ENCODE measurements at regions of chr19 and their contacts with region 1.

Region 1: GRCh38 chr19:18521885-18522624 is at the start of gene ELL:
- DNase-seq: peak; percentile 100
- H3K4me3 Mint-ChIP-seq: peak within 1 kb of the TSS; percentile 91
- H3K27ac Mint-ChIP-seq: peak within 1 kb of the TSS; percentile 88
- H3K4me1 Mint-ChIP-seq: peaks cover 14% of the 10 kb centered on the region
- H3K27me3 Mint-ChIP-seq: peaks cover 1% of the 10 kb centered on the region
- total RNA-seq, gene ELL: 25.5 and 27.8 TPM in 2 replicates

Region 2: DNA sequence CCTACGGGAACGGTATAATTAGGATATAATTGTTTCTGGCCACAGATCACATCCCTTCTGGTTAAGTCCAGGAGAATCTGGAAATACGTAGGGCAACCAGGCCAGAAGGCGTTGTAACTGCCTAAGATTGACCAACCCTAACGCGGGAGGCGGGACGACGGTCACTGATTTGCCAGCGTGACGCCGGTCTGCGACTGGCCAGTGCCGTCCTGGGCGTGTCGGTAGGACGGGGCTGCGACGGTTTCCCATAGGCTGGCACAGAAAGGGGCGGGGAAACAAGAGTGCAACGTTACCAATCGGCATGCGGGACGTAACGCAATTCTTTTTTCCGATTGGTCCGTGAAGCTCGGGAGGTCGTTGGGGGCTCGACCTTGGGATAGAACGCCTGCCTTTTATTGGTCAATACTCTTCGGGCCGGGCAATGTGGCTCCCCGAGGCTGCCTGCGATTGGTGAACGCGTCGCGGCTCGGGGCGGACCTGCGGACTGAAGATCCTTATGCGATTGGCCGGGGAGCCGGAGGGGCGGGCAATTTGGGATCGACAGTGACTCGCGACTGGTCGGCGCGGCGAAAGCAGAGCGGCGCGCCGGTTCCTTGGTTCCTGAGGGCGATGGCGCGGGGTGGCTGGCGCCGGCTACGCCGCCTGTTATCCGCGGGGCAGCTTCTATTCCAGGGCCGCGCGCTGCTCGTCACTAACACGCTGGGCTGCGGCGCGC is 329.2 kb before region 1 on chr19 and contains the start of gene MPV17L2:
- intact Hi-C with region 1: loop called (anchors 1 kb)
- DNase-seq: peak; percentile 99
- H3K4me3 Mint-ChIP-seq: peak within 1 kb of the TSS; percentile 81
- H3K27ac Mint-ChIP-seq: peak within 1 kb of the TSS; percentile 86
- H3K4me1 Mint-ChIP-seq: peaks cover 21% of the 10 kb centered on the region
- H3K27me3 Mint-ChIP-seq: no peaks in the 10 kb centered on the region
- total RNA-seq, gene MPV17L2: 18.4 and 20.9 TPM in 2 replicates

Region 3: GRCh38 chr19:18436671-18437490 is 85.2 kb before region 1 on chr19:
- intact Hi-C with region 1: no loop called
- DNase-seq: peak; percentile 91
- H3K4me3 Mint-ChIP-seq: peak overlapping the region; percentile 73
- H3K27ac Mint-ChIP-seq: peak overlapping the region; percentile 20
- H3K4me1 Mint-ChIP-seq: peaks cover 17% of the 10 kb centered on the region
- H3K27me3 Mint-ChIP-seq: no peaks in the 10 kb centered on the region

Region 4: DNA sequence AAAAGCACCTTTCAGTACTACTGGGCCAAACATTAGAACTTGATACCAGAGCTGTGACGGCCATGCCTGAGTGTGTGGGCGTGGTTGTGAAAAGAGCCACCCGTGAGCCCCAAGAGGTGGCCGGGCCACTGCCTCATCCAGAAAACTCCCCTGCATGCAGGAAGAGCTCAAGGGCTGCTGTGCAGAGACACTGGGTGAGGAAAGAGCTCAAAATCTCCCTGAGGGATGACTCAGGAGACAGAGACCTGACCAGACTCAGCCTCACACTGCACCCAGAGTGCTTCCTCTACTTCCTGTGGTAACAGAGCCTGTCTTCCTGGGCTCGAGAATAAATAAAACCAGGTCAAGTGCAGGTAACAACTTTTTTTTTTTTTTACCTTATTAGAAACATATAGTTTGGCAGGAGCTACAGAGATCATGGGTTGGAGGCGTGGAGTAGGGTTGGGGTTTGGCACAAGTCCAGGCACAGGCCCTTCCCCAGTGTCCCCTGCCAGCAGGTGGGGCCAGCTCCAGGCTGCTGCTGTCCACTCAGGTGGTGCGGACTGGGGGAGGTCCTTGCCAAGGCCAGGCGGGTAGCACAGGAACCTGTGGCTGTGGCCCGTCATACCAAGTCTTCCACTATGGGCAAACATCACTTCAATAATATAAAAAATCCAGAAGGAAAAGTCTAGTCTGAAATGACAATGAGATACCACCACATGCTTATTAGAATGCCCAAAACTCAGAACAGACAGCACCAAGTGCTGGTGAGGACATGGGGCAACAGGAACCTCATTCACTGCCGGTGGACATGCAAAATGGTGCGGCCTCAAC is 25.7 kb before region 1 on chr19:
- intact Hi-C with region 1: loop called (anchors 1 kb)
- DNase-seq: peak; percentile 85
- H3K4me3 Mint-ChIP-seq: peak overlapping the region; percentile 66
- H3K27ac Mint-ChIP-seq: peak overlapping the region; percentile 89
- H3K4me1 Mint-ChIP-seq: peaks cover 60% of the 10 kb centered on the region
- H3K27me3 Mint-ChIP-seq: no peaks in the 10 kb centered on the region

Region 5: DNA sequence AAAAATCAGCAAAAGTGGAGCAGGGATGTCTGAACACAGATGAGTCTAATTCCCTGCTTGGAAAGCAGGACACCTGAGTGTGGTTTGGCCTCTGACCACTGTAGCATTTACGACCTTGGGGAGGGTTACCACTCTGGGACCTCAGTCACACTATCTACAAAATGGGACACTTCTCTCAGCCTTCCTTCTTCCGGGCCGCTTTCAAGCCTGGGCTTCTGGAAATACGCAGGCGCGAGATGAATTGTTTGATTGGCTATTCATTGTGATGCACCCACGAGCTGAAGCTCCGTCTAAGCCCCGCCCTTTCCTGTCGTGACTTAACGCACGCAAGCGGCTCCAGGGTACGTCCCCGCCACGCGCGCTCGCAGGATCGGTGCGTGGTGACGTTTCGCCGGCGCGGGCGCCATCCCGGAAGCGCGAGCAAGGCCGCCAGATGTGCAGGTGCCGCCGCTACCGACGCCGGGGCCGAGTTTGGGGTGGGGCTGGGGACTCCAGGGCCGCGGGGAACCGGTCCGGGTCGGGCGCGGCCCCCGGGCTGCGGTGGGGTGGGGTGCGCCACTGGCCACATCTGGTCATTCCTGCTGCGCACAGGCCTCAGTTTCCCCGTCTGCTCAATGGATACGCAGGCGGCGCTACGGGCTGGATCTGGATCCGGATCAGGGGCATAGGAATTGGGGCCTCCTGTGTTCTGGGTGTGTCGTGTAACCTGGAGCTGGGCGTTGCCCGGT is 35.6 kb after region 1 on chr19 and contains the start of gene KXD1:
- intact Hi-C with region 1: loop called (anchors 1 kb)
- DNase-seq: peak; percentile 99
- H3K4me3 Mint-ChIP-seq: peak within 1 kb of the TSS; percentile 97
- H3K27ac Mint-ChIP-seq: peak within 1 kb of the TSS; percentile 93
- H3K4me1 Mint-ChIP-seq: peaks cover 18% of the 10 kb centered on the region
- H3K27me3 Mint-ChIP-seq: no peaks in the 10 kb centered on the region
- total RNA-seq, gene KXD1: 124 and 134 TPM in 2 replicates

Region 6: GRCh38 chr19:18588611-18589379 is 66.7 kb after region 1 on chr19 and contains the start of gene REX1BD:
- intact Hi-C with region 1: loop called (anchors 1 kb)
- DNase-seq: peak; percentile 97
- H3K4me3 Mint-ChIP-seq: peak within 1 kb of the TSS; percentile 86
- H3K27ac Mint-ChIP-seq: peak within 1 kb of the TSS; percentile 97
- H3K4me1 Mint-ChIP-seq: peaks cover 35% of the 10 kb centered on the region
- H3K27me3 Mint-ChIP-seq: no peaks in the 10 kb centered on the region
- total RNA-seq, gene REX1BD: 130 and 138 TPM in 2 replicates